ENCODE measurements at regions of chr16 and their contacts with region 1.

Region 1: GRCh38 chr16:84672276-84673202 is 24.2 kb downstream of the KLHL36 start:
- DNase-seq: peak; percentile 86
- ATAC-seq: peak; percentile 88
- H3K4me3 Mint-ChIP-seq: no peak overlapping the region
- H3K27ac Mint-ChIP-seq: no peak overlapping the region
- H3K4me1 Mint-ChIP-seq: peaks cover 8% of the 10 kb centered on the region
- H3K27me3 Mint-ChIP-seq: peaks cover 15% of the 10 kb centered on the region

Region 2: GRCh38 chr16:84647828-84648594 is 24.5 kb before region 1 on chr16 and contains the start of gene KLHL36:
- CTCF ChIA-PET with region 1: interaction called, 11 read pairs
- DNase-seq: peak; percentile 71
- ATAC-seq: peak; percentile 93
- H3K4me3 Mint-ChIP-seq: peak within 1 kb of the TSS; percentile 73
- H3K27ac Mint-ChIP-seq: peak within 1 kb of the TSS; percentile 65
- H3K4me1 Mint-ChIP-seq: peaks cover 35% of the 10 kb centered on the region
- H3K27me3 Mint-ChIP-seq: peaks cover 26% of the 10 kb centered on the region
- total RNA-seq, gene KLHL36: 38.5 to 44.9 TPM

Region 3: GRCh38 chr16:84687715-84688114 is 15.2 kb after region 1 on chr16:
- CTCF ChIA-PET with region 1: interaction called, 31 read pairs
- DNase-seq: no peak
- ATAC-seq: peak; percentile 66
- H3K4me3 Mint-ChIP-seq: no peak overlapping the region
- H3K27ac Mint-ChIP-seq: no peak overlapping the region
- H3K4me1 Mint-ChIP-seq: peaks cover 13% of the 10 kb centered on the region
- H3K27me3 Mint-ChIP-seq: peaks cover 26% of the 10 kb centered on the region

Region 4: DNA sequence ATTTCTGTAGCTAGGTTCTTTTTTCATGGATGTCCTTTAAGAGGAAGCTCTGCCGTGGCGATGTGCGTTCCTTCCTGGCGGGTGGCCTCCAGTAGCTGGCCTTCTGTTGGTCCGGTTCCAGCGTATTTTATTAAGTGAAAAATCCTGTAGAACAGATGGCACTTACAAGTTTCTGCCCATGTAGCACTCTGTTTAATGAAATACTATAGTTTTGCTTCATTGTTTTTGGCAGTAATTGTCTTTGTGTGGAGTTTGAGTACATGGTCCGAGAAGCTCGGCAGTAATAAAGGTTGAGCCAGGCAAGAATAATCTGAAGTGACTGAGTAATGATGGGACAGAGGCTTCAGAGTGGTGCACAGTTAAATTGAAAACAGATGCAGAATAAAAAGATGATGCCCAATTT is 47.6 kb after region 1 on chr16:
- CTCF ChIA-PET with region 1: interaction called, 76 read pairs
- DNase-seq: no peak
- ATAC-seq: no peak
- H3K4me3 Mint-ChIP-seq: no peak overlapping the region
- H3K27ac Mint-ChIP-seq: no peak overlapping the region
- H3K4me1 Mint-ChIP-seq: peaks cover 59% of the 10 kb centered on the region
- H3K27me3 Mint-ChIP-seq: no peaks in the 10 kb centered on the region

Region 5: GRCh38 chr16:84732674-84733352 is 60.3 kb after region 1 on chr16:
- CTCF ChIA-PET with region 1: interaction called, 76 read pairs
- DNase-seq: no peak
- ATAC-seq: no peak
- H3K4me3 Mint-ChIP-seq: no peak overlapping the region
- H3K27ac Mint-ChIP-seq: no peak overlapping the region
- H3K4me1 Mint-ChIP-seq: peaks cover 56% of the 10 kb centered on the region
- H3K27me3 Mint-ChIP-seq: no peaks in the 10 kb centered on the region

Measured in activated CD8-positive, alpha-beta memory T cell treated with anti-CD3 and anti-CD28 coated beads, Interleukin-2, amount 10 ng/mL, durations not matched to agents 7 days and 5 days (primary cell).